ENCODE measurements at regions of chr11 and their contacts with region 1.

Region 1: DNA sequence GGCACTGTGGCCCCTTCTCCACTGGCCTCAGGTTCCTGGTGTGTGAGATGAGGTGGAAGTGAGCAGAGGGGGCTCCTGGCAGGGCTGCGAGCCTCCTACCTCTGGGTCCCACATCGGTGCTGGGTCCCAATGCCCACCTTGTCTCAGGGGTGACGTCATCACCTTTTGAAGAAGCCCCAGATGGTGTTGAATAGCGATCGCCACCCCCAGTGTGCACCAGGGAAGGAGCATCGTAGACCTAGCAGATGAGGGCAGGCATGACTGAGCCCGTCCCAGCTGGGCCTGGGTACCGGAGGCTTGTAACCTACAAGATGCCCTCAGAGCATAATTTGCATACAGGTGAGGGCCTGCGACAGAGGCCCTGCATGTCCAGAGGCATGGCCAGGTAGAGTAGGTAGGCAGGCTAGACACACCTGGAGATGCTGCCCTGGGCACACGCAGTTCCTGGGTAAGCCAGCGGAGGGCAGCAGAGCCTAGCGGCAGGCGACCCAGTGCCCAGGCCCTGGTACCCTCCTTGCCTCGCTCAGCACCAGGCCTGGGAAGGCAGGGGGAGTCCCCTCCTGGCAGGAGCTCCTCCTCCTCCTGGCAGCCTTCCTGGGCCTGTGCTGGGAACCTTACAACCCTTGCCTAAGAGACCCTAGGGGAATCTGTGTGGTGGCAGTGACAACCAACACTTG is 52.5 kb downstream of the TPCN2 start:
- H3K4me3 ChIP-seq: no peak overlapping the region
- H3K27ac ChIP-seq: no peak overlapping the region
- H3K4me1 ChIP-seq: no peaks in the 10 kb centered on the region
- CTCF ChIP-seq: peak; percentile 86

Region 2: GRCh38 chr11:69083531-69084247 is 17.6 kb before region 1 on chr11:
- CTCF ChIA-PET with region 1: no interaction called
- POLR2A ChIA-PET with region 1: no interaction called
- H3K4me3 ChIP-seq: no peak overlapping the region
- H3K27ac ChIP-seq: no peak overlapping the region
- H3K4me1 ChIP-seq: no peaks in the 10 kb centered on the region
- CTCF ChIP-seq: no peak

Region 3: DNA sequence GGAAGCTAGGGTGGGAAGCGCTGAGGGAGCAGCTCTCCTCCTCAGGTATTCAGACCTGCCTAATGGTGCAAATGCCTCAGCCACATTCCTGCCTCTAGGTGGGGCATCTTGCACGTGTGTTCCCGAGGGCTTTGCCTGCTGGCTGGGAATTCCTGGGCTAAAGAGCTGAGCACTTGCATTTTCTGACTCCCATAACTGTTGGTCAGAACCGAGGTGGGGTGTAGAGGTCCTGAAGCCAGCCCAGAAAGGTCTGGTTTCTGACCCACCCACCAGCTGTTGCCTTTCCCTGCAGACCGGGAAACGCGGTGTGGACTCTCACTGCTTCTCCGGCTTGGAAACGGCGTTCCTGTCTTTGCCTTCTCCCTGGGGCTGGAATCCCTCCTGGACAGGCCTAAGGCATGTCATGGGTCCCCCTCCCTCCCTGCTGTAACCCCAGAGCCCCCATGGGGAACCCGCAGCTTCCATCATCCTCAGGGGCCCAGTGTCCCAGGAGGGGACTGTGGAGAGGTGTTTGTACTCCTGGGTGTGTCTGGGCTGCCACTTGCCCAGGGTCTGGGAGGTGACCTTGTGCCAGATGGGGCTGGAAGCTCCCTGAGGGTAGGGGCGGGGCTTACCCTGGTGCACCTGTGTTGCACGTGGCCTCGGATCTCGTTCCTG is 30.5 kb after region 1 on chr11:
- CTCF ChIA-PET with region 1: interaction called, 13 read pairs
- POLR2A ChIA-PET with region 1: no interaction called
- H3K4me3 ChIP-seq: no peak overlapping the region
- H3K27ac ChIP-seq: no peak overlapping the region
- H3K4me1 ChIP-seq: no peaks in the 10 kb centered on the region
- CTCF ChIP-seq: 0 out of 2 replicates have a peak, but pooled peaks have one; percentile 21

Region 4: DNA sequence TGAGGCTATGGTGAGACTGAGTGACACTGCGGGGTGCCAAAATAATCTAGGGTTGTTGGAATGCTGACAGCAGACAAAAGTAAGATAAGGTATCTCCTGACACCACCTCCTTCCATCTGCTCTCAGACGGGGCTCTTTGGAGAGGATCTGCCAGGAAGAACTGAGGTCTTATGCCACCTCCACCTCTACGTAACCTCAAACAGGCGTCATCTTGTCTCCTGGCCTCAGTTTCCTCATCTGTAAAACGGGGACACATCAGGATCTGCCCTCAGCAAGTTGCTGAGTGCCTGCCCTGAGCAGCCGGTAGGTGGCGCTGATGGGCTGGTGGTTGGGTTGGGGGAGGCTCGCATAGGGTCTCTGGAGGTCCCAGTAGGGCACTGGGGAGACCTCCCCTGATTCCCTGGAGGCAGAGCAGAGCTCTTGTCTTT is 191.0 kb after region 1 on chr11:
- CTCF ChIA-PET with region 1: interaction called, 12 read pairs
- POLR2A ChIA-PET with region 1: no interaction called
- H3K4me3 ChIP-seq: no peak overlapping the region
- H3K27ac ChIP-seq: no peak overlapping the region
- H3K4me1 ChIP-seq: no peaks in the 10 kb centered on the region
- CTCF ChIP-seq: 0 out of 2 replicates have a peak, but pooled peaks have one; percentile 19

Region 5: GRCh38 chr11:69417146-69418085 is 316.2 kb after region 1 on chr11:
- CTCF ChIA-PET with region 1: no interaction called
- POLR2A ChIA-PET with region 1: no interaction called
- H3K4me3 ChIP-seq: no peak overlapping the region
- H3K27ac ChIP-seq: no peak overlapping the region
- H3K4me1 ChIP-seq: no peaks in the 10 kb centered on the region
- CTCF ChIP-seq: no peak

Region 6: DNA sequence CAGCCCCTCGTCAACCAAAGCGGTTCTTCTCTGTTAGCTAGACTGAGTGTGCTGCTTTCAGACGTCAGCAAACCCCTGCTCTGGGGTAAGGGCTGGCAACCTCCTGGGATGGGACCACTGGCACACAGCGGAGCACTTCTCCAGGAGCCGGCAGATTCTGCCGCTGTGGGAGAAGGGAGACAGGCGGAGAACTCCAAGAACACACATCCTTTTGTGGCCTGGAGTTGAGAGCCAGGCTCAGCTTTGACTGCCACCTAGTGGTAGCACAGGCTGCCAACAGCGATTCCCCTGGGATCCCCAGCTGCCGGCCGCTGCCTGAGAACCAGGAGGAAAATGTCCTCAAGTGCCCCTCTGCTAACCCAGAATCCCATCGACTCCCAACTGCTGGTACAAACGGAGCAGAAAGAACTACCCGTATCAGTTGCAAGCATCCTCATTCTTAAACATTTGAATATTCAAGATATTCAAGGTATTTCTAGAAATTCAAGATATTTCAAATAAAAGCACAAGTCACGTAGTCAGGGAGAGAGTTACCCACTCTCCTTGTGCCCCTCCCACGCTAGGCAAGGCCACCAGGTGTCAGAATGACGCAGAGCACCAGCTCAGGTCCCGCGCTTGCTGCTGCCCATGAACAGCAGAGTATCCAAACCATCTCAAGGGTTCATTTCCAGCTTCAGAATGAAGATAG is 569.0 kb after region 1 on chr11:
- CTCF ChIA-PET with region 1: interaction called, 52 read pairs
- POLR2A ChIA-PET with region 1: no interaction called
- H3K4me3 ChIP-seq: no peak overlapping the region
- H3K27ac ChIP-seq: no peak overlapping the region
- H3K4me1 ChIP-seq: peaks cover 4% of the 10 kb centered on the region; the same call in 1 of the 2 replicates
- CTCF ChIP-seq: peak; percentile 72; the same call in 1 of the 2 replicates

Region 7: DNA sequence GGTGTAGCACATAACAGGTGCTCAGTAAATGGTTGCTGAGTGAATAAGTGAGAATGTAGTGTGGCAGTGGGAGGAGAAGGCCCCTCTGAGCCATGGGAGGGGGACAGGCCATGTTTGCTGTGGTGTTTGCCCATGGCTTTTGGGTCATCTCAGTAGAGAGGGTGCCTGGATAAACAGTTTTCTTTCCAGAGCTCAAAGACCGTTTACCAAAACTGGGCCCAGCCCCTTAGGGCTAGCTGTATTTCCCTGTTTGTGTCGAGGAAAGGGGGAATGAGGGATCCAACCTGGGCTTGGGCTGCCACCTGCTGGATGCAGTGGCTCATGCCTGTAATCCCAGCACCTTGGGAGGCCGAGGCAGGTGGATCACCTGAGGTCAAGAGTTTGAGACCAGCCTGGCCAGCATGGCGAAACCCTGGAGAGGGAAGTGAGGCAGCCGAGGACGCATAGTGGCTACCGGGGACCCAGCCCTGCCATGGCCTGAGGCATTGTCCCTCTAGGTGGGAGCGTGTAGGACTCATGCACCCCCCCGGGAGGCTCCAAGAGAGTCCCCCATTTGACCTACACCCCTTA is 582.6 kb after region 1 on chr11:
- CTCF ChIA-PET with region 1: interaction called, 14 read pairs
- POLR2A ChIA-PET with region 1: no interaction called
- H3K4me3 ChIP-seq: no peak overlapping the region
- H3K27ac ChIP-seq: no peak overlapping the region
- H3K4me1 ChIP-seq: no peaks in the 10 kb centered on the region
- CTCF ChIP-seq: peak; percentile 55; the same call in 1 of the 2 replicates

Measured in HEK293 (cell line).